MCF 10A (cell line): ENCODE measurements at regions of chr20 and their contacts with region 1.

Region 1: GRCh38 chr20:51750037-51750763 is 18.0 kb downstream of the ATP9A start:
- DNase-seq: peak; percentile 99
- H3K4me3 Mint-ChIP-seq: peak overlapping the region; percentile 59
- H3K27ac Mint-ChIP-seq: peak overlapping the region; percentile 94
- H3K4me1 Mint-ChIP-seq: peaks cover 26% of the 10 kb centered on the region
- H3K27me3 Mint-ChIP-seq: no peaks in the 10 kb centered on the region
- CTCF ChIP-seq: no peak

Region 2: DNA sequence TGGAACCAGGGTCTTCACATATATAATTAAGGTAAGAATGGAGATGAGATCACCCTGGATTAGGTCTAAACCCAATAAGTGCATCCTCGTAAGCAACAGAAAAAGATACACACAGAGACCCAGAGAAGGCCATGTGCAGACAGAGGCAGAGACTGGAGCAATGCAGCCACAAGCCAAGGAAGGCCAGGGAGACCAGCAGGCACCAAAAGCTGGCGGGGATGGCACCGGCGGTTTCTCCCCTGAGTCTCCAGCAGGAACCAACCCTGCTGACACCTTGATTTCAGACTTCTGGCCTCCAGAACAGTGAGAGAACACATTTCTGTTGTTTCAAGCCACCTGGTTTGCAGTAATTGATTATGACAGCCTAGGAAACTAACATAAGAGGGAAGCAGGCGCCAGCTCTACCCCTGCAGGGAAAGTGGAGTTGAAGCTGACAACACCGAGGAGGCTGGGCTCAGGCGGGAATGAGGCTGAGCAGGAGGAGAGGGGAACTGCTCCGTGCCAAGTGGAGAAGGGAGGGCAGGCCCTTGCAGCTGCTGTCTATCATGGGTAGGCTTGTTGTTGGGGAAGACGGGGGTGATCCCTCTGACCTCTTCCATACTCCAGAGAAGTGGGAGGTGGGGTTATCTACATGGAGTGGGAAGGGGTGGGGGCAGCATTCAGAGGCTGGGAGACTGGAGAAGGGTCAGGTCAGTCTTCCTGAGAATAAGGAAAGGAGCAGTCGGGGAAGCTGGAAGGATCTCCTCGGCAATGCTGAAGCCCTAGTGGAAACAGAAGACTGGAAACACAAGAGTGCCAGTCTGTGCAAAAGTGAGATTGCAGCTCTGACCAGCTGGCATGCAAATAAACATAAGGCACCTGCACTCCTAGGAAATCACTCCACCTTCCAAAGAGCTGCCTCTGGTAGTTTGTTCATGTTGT is 280.4 kb before region 1 on chr20:
- CTCF ChIA-PET with region 1: no interaction called
- POLR2A ChIA-PET with region 1: no interaction called
- intact Hi-C with region 1: no loop called
- DNase-seq: no peak
- H3K4me3 Mint-ChIP-seq: no peak overlapping the region
- H3K27ac Mint-ChIP-seq: peak overlapping the region; percentile 20
- H3K4me1 Mint-ChIP-seq: no peaks in the 10 kb centered on the region
- H3K27me3 Mint-ChIP-seq: peaks cover 21% of the 10 kb centered on the region
- CTCF ChIP-seq: no peak

Region 3: DNA sequence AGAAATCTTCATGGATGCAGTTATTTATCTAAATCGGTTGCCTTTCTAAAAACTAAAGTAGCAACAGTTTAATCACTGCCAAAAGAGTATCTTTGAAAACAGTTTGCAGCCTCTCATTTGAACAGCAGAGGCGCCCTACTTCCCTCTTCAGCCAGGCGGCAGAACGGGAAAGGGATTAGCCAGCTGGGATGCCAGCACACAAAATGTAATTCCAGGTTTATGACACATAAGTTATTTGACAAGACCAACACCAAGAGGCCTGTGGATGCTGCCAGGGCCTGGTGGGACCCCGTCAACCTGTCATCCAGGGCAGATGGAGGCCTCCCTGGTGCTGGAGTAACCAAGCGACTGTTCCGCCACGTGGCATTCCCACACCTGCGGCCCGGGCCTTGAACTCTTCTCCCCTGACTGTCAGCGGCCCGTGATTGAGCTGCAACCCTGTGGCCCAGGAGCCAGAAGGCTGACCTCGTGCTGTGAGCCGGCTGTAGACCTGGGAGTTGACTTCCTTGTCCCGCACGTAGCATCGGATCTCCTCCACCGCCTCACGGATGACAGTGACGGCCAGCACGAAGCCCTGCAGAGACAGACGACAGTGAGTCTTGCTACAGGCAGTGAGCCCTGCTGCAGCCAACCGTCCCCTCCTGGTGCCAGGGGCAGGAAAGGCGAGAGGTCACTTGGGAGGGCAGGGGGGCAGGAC is 37.6 kb before region 1 on chr20:
- CTCF ChIA-PET with region 1: no interaction called
- POLR2A ChIA-PET with region 1: no interaction called
- intact Hi-C with region 1: no loop called
- DNase-seq: peak; percentile 23
- H3K4me3 Mint-ChIP-seq: no peak overlapping the region
- H3K27ac Mint-ChIP-seq: no peak overlapping the region
- H3K4me1 Mint-ChIP-seq: no peaks in the 10 kb centered on the region
- H3K27me3 Mint-ChIP-seq: no peaks in the 10 kb centered on the region
- CTCF ChIP-seq: no peak

Region 4: GRCh38 chr20:51767010-51767558 is 16.9 kb after region 1 on chr20:
- CTCF ChIA-PET with region 1: interaction called, 4 read pairs
- POLR2A ChIA-PET with region 1: interaction called, 13 read pairs
- intact Hi-C with region 1: loop called (anchors 2 kb)
- DNase-seq: peak; percentile 88
- H3K4me3 Mint-ChIP-seq: peak overlapping the region; percentile 68
- H3K27ac Mint-ChIP-seq: peak overlapping the region; percentile 54
- H3K4me1 Mint-ChIP-seq: peaks cover 6% of the 10 kb centered on the region
- H3K27me3 Mint-ChIP-seq: no peaks in the 10 kb centered on the region
- CTCF ChIP-seq: no peak

Region 5: GRCh38 chr20:51828467-51829161 is 78.4 kb after region 1 on chr20:
- CTCF ChIA-PET with region 1: no interaction called
- POLR2A ChIA-PET with region 1: no interaction called
- intact Hi-C with region 1: no loop called
- DNase-seq: no peak
- H3K4me3 Mint-ChIP-seq: no peak overlapping the region
- H3K27ac Mint-ChIP-seq: no peak overlapping the region
- H3K4me1 Mint-ChIP-seq: no peaks in the 10 kb centered on the region
- H3K27me3 Mint-ChIP-seq: no peaks in the 10 kb centered on the region
- CTCF ChIP-seq: no peak